ENCODE measurements at regions of chr6 and their contacts with region 1.

Region 1: DNA sequence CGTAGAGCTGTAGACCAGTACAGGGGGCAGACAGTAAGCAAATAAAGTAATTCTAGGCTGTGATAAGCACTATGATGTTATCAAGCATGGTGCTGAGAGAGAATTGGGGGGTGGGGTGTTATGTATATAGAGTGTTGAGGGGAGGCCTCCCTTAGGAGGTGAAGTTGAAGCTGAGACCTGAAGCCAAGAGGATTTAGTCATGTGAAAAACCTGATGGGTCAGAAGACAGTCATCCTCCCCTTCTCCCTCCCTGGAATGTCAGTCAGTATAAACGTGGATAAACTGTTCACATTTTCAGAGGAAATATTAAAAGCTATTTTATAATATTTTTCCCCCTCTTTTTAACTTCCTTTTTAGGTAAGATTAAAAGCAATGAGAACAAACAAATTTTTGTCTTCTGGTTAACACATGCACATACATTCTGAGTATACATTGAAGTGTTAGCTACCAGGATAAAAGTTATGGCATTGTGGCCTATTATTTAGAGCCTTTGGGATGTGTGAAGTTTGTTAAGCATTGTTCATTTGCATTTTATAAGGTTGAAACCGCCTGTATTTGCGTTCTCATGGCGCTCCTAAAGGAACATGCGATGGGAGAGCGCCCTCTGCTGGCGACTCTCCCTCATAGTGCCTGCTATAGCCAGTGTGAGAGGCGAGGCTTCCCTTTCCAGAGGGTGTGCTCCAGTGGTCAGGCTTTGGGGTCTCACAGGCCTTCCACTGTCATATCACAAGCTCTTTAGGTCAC is 35.4 kb upstream of the MAPK13 start:
- DNase-seq: peak; percentile 77 to 86 (median 79)
- H3K4me3 ChIP-seq: no peak overlapping the region
- H3K4me3 Mint-ChIP-seq: no peak overlapping the region
- H3K27ac ChIP-seq: peak overlapping the region in 1 of 2 donors; percentile 54
- H3K27ac Mint-ChIP-seq: peak overlapping the region; percentile 25 to 85 (median 68)
- H3K4me1 ChIP-seq: no peaks in the 10 kb centered on the region
- H3K4me1 Mint-ChIP-seq: peaks cover 7% of the 10 kb centered on the region
- H3K27me3 ChIP-seq: no peaks in the 10 kb centered on the region
- H3K27me3 Mint-ChIP-seq: no peaks in the 10 kb centered on the region
- CTCF ChIP-seq: peak; percentile 96

Region 2: GRCh38 chr6:36027501-36028087 is 67.3 kb before region 1 on chr6 and contains the start of gene MAPK14:
- intact Hi-C with region 1: loop called (anchors 1 to 2 kb)
- DNase-seq: peak; percentile 99 to 100 (median 100)
- H3K4me3 ChIP-seq: peak within 1 kb of the TSS; percentile 87 to 99 (median 99)
- H3K4me3 Mint-ChIP-seq: peak within 1 kb of the TSS; percentile 92 to 98
- H3K27ac ChIP-seq: peak within 1 kb of the TSS; percentile 82 to 92
- H3K27ac Mint-ChIP-seq: peak within 1 kb of the TSS; percentile 90 to 98 (median 96)
- H3K4me1 ChIP-seq: peaks cover 50 to 57% of the 10 kb centered on the region in 2 donors
- H3K4me1 Mint-ChIP-seq: peaks cover 50% of the 10 kb centered on the region
- H3K27me3 ChIP-seq: no peaks in the 10 kb centered on the region
- H3K27me3 Mint-ChIP-seq: peaks cover 0 to 3% (median 2%) of the 10 kb centered on the region in 3 donors
- CTCF ChIP-seq: peak; percentile 86
- polyA plus RNA-seq, gene MAPK14: 56.6 to 96.6 (median 83.7) TPM